Left cardiac atrium (tissue), 4 donors: ENCODE measurements at regions of chr4 and their contacts with region 1.

Region 1: DNA sequence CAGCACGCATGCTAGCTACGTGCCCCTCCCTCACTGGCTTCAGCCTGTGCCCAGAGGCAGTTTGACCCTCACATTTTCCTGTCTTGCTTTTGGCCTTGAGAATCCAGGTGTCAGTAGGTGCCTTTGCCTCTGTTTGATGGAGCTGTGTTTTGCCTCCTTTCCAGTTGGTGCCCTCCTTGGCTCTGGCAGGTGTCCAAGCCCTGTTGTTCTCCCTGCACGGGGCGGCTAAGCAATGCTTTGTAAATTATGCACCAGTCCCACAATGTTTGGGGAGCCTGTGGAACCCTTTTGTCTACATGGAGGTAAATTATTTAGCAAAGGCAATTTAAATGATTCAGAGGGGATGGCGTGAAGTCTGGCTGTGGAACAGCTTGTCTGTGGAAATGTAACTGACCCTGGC is 202.9 kb upstream of the BOD1L1 start:
- DNase-seq: peak; percentile 23
- ATAC-seq: no peak

Region 2: GRCh38 chr4:13694256-13694655 is 136.2 kb before region 1 on chr4:
- intact Hi-C with region 1: loop called in 1 of 2 experiments (anchors 10 kb)
- DNase-seq: no peak
- ATAC-seq: peak; percentile 88 to 91